Ovary (tissue), 10 donors: ENCODE measurements at regions of chr7 and their contacts with region 1.

Region 1: DNA sequence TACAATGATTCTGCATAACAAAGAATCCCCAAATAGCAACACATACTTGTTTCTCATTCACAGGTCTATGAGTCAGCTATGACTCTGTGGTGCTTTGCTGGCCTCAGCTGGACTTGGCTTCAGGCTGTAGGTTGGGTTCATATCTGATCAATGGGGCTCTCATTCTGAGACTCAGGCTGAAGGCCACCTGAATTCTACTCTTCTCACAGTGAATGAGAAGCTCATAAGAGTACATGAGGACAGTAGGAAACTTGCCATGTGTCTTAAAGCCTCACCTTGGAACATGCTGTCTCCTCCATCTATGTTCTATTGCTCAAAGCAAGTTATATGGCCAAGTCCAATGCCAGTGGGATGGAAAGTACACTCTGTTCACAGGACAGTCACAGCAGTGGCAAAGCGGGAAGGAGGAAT is 292.9 kb downstream of the BMPER start:
- DNase-seq: no peak
- H3K4me3 ChIP-seq: no peak overlapping the region
- H3K27ac ChIP-seq: no peak overlapping the region
- H3K4me1 ChIP-seq: no peaks in the 10 kb centered on the region
- H3K27me3 ChIP-seq: no peaks in the 10 kb centered on the region
- CTCF ChIP-seq: no peak
- EP300 ChIP-seq: no peak
- POLR2A ChIP-seq: no peak

Region 2: DNA sequence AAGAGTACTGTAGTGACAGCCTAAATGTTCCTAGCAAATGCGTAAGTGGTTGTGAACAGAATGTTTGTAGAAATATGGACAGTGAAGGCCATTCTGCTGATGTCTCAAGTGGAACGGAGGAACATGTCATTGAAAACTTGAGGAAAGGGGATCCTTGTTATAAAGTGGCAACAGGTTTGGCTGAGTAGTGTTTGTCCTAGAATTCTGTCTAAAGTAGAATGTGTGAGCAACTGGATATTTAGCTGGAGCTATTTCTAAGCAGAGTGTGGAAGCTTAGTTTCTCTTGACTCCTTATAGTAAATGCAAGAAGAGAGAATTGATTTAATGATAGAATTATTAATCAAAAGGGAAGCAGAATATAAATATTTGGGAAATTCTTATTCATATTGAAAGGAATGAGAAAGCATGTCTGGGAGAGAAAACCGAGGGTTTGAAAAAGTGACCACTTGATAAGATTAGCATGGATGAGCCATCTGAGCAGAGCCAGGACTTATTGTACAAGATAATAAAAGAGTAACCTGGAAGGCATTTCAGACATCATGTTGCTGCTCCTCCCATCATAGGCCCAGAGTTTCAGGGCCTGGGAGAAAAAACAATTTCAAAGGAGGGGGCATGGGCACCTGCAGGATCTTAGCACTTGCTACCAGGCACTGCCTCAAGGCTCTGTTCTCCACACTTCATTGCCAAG is 16.8 kb before region 1 on chr7:
- intact Hi-C with region 1: loop called in 1 of 4 experiments (anchors 1 kb)
- DNase-seq: no peak
- H3K4me3 ChIP-seq: no peak overlapping the region
- H3K27ac ChIP-seq: no peak overlapping the region
- H3K4me1 ChIP-seq: no peaks in the 10 kb centered on the region
- H3K27me3 ChIP-seq: no peaks in the 10 kb centered on the region
- CTCF ChIP-seq: no peak
- EP300 ChIP-seq: no peak
- POLR2A ChIP-seq: no peak